ENCODE measurements at regions of chr20 and their contacts with region 1.

Region 1: DNA sequence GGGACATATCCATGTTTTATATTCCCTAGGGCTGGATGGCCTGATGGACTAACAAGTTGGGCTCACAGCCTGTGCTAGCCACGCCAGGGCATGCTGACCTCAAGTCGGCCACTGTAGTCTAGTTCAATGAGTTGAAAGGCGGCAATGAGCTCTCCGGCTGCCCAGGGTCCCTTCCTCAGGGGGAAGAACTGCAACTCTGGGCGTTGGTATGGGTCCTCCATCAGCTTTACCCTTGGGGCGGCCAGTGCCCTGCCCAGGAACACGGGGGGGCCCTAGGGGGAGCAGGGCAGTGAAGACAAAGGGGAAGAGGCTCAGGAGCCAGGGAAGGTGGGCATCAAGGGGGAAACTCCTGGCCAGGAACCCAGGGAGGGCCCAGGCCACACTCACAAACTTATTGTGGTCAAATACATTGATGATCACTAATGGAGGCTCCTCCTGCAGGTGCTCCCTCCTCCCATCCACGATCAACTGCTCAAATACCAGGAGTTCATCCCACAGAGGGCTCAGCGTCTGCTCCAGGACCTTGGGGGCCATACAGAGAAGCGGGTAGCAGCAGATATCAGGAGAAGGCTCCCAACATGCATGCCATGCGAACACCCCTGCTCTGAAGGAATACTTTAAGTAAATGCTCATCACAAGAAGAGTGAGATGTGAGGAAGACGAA is 32.8 kb upstream of the SPAG4 start:
- DNase-seq: no peak
- ATAC-seq: no peak
- H3K4me3 ChIP-seq: no peak overlapping the region
- H3K4me3 Mint-ChIP-seq: no peak overlapping the region
- H3K27ac ChIP-seq: no peak overlapping the region
- H3K27ac Mint-ChIP-seq: no peak overlapping the region
- H3K4me1 ChIP-seq: no peaks in the 10 kb centered on the region
- H3K4me1 Mint-ChIP-seq: no peaks in the 10 kb centered on the region
- H3K27me3 ChIP-seq: peaks cover 0 to 20% of the 10 kb centered on the region in 2 experiments
- H3K27me3 Mint-ChIP-seq: no peaks in the 10 kb centered on the region

Region 2: DNA sequence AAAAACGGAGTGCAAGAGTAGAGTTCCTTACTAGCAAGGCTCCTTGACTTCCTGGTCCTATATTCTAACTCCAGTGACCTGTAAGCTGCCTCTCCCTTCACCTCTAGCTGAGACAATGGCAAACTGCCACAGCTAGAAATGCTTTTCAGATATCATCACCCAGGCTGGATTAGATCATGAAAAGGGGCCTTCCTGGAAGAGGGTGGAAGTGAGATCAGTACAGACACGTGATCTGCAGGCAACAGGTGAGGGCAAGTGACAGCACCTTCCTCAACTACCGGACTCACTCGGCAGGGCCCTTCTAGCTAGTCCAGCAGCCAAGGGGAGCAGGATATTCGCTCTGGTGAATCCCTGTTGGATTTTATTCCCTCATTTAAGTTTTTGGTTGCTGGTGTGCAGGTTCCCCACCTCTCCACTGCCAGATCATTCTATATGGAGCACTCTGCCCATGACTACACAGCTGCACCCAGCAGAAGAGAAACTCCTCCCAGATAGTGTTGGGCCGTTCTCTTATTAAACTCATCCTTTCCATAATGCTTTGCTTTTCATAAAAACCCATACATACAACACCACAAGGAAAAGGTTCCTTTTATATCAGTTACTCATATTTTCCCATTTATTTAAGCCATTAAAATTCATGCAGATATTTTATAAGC is 264.2 kb before region 1 on chr20:
- CTCF ChIA-PET with region 1: no interaction called
- POLR2A ChIA-PET with region 1: no interaction called
- DNase-seq: no peak
- ATAC-seq: no peak
- H3K4me3 ChIP-seq: no peak overlapping the region
- H3K4me3 Mint-ChIP-seq: no peak overlapping the region
- H3K27ac ChIP-seq: no peak overlapping the region
- H3K27ac Mint-ChIP-seq: no peak overlapping the region
- H3K4me1 ChIP-seq: peaks cover 0 to 5% of the 10 kb centered on the region in 2 experiments
- H3K4me1 Mint-ChIP-seq: peaks cover 6 to 15% (median 9%) of the 10 kb centered on the region in 3 donors
- H3K27me3 ChIP-seq: no peaks in the 10 kb centered on the region
- H3K27me3 Mint-ChIP-seq: no peaks in the 10 kb centered on the region

Region 3: GRCh38 chr20:35562496-35563110 is 20.3 kb before region 1 on chr20:
- CTCF ChIA-PET with region 1: no interaction called
- POLR2A ChIA-PET with region 1: interaction called in 1 of 2 experiments, 18 read pairs
- DNase-seq: no peak
- ATAC-seq: no peak
- H3K4me3 ChIP-seq: no peak overlapping the region
- H3K4me3 Mint-ChIP-seq: no peak overlapping the region
- H3K27ac ChIP-seq: no peak overlapping the region
- H3K27ac Mint-ChIP-seq: no peak overlapping the region
- H3K4me1 ChIP-seq: no peaks in the 10 kb centered on the region
- H3K4me1 Mint-ChIP-seq: no peaks in the 10 kb centered on the region
- H3K27me3 ChIP-seq: peaks cover 0 to 3% of the 10 kb centered on the region in 2 experiments
- H3K27me3 Mint-ChIP-seq: peaks cover 0 to 2% of the 10 kb centered on the region in 2 donors

Measured in T-cell (primary cell).